Sigmoid colon (tissue), 7 donors: ENCODE measurements at regions of chr3 and their contacts with region 1.

Region 1: GRCh38 chr3:185983495-185984141 is 45.8 kb upstream of the TRA2B start:
- DNase-seq: peak; percentile 83
- H3K4me3 ChIP-seq: no peak overlapping the region
- H3K27ac ChIP-seq: no peak overlapping the region
- H3K4me1 ChIP-seq: peaks cover 0 to 6% (median 4%) of the 10 kb centered on the region in 4 donors
- H3K27me3 ChIP-seq: peaks cover 0 to 11% (median 6%) of the 10 kb centered on the region in 3 donors
- CTCF ChIP-seq: peak; percentile 60 to 90 (median 86)
- EP300 ChIP-seq: no peak
- POLR2A ChIP-seq: no peak

Region 2: DNA sequence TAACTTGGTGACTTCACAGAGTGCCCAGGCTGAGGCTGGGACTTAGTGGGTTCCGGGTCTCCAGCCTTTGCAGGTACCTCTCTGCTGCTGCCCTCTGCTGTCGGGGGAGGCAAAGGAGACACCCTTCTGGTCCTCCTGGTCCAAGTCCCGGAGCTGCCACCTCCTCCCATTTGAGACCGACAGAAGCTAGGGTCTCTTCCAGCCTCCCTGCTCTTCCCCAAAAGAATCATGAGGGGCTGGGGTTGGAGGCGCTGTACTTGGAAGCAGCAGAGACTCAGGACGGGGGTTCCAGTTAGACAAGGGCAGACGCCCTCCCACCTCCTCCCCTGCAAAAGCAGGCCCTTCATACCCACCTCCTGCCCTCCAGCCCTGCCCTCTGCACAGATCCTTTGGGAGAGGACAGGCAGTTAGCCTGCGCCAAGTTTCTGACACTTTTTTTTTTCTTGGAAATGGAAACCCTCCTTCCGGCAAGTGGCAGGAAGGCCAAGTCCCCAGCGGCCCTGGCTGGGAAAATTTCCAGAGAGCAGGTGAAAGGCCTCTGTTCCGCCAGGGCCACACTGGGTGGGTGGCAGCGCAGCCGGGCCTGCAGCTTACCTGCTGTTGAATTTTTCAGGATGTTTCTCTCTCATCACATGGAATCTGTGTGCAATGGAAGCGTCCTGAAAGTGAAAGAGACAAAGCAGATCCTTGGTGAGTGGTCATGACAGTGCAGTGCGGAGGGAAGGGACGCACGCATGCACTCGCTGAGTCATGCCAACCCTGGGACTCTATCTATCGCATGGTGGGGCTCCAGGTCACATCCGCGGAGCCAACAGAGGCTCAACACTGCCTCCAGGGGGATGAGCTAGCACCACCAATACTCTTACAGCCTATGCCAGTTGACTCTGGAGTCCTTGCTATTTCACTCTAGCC is 258.5 kb after region 1 on chr3:
- intact Hi-C with region 1: loop called (anchors 2 kb)
- DNase-seq: peak; percentile 79
- H3K4me3 ChIP-seq: peak overlapping the region in 3 of 4 donors; percentile 13 to 20 (median 18)
- H3K27ac ChIP-seq: peak overlapping the region in 2 of 4 donors; percentile 18 to 58
- H3K4me1 ChIP-seq: peaks cover 0 to 10% (median 4%) of the 10 kb centered on the region in 4 donors
- H3K27me3 ChIP-seq: no peaks in the 10 kb centered on the region
- CTCF ChIP-seq: peak in 1 of 4 experiments; percentile 39
- EP300 ChIP-seq: no peak
- POLR2A ChIP-seq: no peak

Region 3: GRCh38 chr3:186540221-186540834 is 556.7 kb after region 1 on chr3:
- intact Hi-C with region 1: loop called (anchors 5 kb)
- DNase-seq: peak; percentile 82
- H3K4me3 ChIP-seq: peak overlapping the region in 2 of 4 donors; percentile 23 to 25
- H3K27ac ChIP-seq: peak overlapping the region in 1 of 4 donors; percentile 21
- H3K4me1 ChIP-seq: peaks cover 0 to 7% (median 4%) of the 10 kb centered on the region in 4 donors
- H3K27me3 ChIP-seq: no peaks in the 10 kb centered on the region
- CTCF ChIP-seq: peak; percentile 62 to 73 (median 66)
- EP300 ChIP-seq: no peak
- POLR2A ChIP-seq: no peak